Activated CD8-positive, alpha-beta T cell treated with anti-CD3 and anti-CD28 coated beads for 36 hours (primary cell): ENCODE measurements at regions of chr7 and their contacts with region 1.

Region 1: DNA sequence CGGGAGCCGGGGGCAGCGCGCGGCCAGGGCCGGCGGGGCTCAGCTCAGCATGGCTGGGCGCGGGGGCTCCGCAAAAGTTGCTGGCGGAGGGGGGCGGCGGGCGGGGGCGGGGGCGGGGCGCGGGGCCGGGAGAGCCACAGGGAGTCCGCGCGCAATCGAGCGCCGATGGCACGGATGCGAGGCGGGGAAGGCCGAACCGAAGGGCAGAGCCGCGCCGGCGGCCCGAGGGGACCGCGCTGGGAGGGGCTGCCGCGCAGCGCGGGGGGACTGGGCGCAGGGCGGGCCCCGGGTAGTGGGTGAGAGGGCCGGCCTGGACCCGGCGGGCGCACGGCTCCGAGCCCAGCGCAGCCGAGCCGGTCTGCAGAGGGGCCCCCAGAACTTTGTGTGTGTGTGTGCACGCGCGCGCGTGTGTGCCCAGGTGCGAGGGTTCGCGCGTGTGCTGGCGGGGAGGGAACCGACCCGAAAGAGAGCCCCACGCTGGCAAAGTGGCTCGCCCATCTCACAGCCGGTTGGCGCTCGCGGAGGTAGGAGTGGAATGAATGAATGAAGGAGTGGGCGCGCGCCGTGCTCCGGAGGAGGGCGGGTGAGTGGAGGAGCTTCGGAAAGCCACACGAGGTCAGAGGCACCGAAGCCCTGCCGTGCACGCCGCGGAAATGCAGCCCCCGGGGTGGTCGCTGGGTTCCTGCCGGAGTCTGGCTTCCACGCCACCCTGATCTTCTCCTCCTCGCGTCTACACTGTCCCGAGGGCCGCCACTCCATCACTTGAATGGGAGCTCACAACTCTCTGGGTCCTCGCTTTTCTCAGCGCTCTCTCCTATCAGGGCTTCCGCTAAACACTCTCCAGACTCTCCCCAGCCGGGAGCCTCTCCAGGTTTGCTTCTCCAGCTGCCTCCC is at the start of gene HIPK2:
- DNase-seq: peak; percentile 71
- ATAC-seq: peak; percentile 55
- H3K4me3 Mint-ChIP-seq: peak within 1 kb of the TSS; percentile 96
- H3K27ac Mint-ChIP-seq: peak within 1 kb of the TSS; percentile 96
- H3K4me1 Mint-ChIP-seq: peaks cover 35% of the 10 kb centered on the region
- H3K27me3 Mint-ChIP-seq: peaks cover 20% of the 10 kb centered on the region
- CTCF ChIP-seq: no peak
- total RNA-seq, gene HIPK2: 17.3 to 17.6 TPM

Region 2: DNA sequence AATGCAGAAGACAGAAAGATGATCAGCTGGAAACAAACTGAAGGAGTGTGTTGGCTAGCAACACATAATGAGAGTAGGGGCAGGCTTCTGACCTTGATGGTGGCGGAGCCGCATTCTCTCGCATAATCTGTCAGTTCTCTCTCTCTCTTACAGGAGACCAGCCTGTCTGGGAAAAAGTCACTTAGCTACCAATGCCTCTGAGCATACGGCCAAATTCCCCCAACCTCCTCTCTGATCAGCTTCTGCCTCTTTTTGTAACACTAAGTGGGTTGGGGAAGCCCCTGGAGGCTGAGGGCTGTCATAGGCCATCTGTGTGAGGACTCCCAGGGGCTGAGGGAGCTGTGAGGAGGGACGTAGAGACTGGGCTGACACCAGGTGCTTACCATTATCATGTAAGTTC is 105.0 kb before region 1 on chr7:
- CTCF ChIA-PET with region 1: no interaction called
- POLR2A ChIA-PET with region 1: interaction called, 3 read pairs
- intact Hi-C with region 1: loop called (anchors 5 kb)
- DNase-seq: peak; percentile 81
- ATAC-seq: peak; percentile 92
- H3K4me3 Mint-ChIP-seq: peak overlapping the region; percentile 52
- H3K27ac Mint-ChIP-seq: peak overlapping the region; percentile 92
- H3K4me1 Mint-ChIP-seq: peaks cover 57% of the 10 kb centered on the region
- H3K27me3 Mint-ChIP-seq: no peaks in the 10 kb centered on the region
- CTCF ChIP-seq: no peak

Region 3: GRCh38 chr7:139915864-139916716 is 137.9 kb after region 1 on chr7:
- CTCF ChIA-PET with region 1: no interaction called
- POLR2A ChIA-PET with region 1: no interaction called
- intact Hi-C with region 1: loop called (anchors 10 kb)
- DNase-seq: peak; percentile 87
- ATAC-seq: peak; percentile 89
- H3K4me3 Mint-ChIP-seq: no peak overlapping the region
- H3K27ac Mint-ChIP-seq: peak overlapping the region; percentile 54
- H3K4me1 Mint-ChIP-seq: peaks cover 18% of the 10 kb centered on the region
- H3K27me3 Mint-ChIP-seq: peaks cover 4% of the 10 kb centered on the region
- CTCF ChIP-seq: no peak